ENCODE measurements at regions of chr12 and their contacts with region 1.

Region 1: GRCh38 chr12:124506145-124506831 is 61.1 kb downstream of the NCOR2 start:
- DNase-seq: no peak
- H3K4me3 ChIP-seq: no peak overlapping the region
- H3K27ac ChIP-seq: no peak overlapping the region
- H3K4me1 ChIP-seq: peaks cover 32% of the 10 kb centered on the region
- H3K27me3 ChIP-seq: no peaks in the 10 kb centered on the region
- CTCF ChIP-seq: no peak

Region 2: DNA sequence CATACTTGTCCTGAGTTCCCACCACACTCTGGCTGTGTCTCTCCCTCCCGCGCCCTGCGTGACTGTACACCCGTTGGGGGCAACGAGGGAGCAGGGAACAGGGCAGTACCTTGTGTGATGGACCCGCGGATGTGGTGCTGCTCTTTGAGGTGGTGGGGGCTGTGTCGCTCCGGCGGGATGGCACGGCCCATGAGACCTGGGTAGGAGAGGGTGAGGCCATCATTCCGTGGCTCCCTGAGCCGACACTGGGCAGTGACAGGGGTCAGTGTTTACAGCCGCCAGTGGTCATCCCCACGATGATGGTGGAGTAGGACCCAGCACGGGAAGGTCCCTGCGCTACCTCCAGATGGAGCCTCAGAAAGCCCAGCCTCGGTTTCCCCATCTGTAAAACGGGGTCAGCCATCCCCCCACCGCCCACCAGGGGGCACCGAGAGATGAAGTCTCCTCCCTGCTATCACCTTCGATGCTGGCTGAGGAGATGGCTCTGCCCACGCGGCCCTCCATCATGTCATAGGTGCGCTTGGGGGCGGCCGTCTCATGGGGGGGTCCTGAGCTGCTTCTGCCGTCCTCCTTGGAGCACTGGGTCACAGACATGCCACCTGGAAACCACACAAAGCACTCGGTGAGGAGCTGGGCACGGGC is 158.5 kb before region 1 on chr12:
- CTCF ChIA-PET with region 1: no interaction called
- POLR2A ChIA-PET with region 1: no interaction called
- intact Hi-C with region 1: no loop called
- DNase-seq: no peak
- H3K4me3 ChIP-seq: no peak overlapping the region
- H3K27ac ChIP-seq: no peak overlapping the region
- H3K4me1 ChIP-seq: no peaks in the 10 kb centered on the region
- H3K27me3 ChIP-seq: no peaks in the 10 kb centered on the region
- CTCF ChIP-seq: peak; percentile 71

Region 3: GRCh38 chr12:124727264-124727721 is 221.0 kb after region 1 on chr12:
- CTCF ChIA-PET with region 1: no interaction called
- POLR2A ChIA-PET with region 1: no interaction called
- intact Hi-C with region 1: loop called (anchors 5 kb)
- DNase-seq: peak; percentile 86 to 97
- H3K4me3 ChIP-seq: no peak overlapping the region
- H3K27ac ChIP-seq: peak overlapping the region; percentile 91
- H3K4me1 ChIP-seq: peaks cover 45% of the 10 kb centered on the region
- H3K27me3 ChIP-seq: no peaks in the 10 kb centered on the region
- CTCF ChIP-seq: no peak

Region 4: DNA sequence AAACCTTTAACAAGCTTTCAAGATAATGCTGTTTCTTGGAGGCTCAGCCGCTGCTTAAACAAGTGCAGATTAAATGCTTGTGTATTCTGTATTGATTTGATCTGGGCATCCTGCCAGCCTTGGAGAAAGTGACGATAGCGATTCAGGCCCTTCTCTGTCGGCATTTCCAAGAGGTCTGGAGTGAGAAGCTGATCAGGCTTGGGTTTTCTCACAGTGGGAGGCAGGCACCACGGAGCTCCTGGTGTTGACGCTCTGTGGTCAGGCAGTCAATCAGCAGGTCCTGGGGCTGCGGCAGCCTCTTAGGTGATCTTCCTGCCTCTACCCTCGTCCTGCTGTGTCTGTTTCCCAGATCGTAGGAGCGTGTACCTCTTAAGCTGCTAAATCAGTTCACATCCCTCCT is 714.1 kb after region 1 on chr12:
- CTCF ChIA-PET with region 1: no interaction called
- POLR2A ChIA-PET with region 1: no interaction called
- intact Hi-C with region 1: no loop called
- DNase-seq: no peak
- H3K4me3 ChIP-seq: no peak overlapping the region
- H3K27ac ChIP-seq: no peak overlapping the region
- H3K4me1 ChIP-seq: no peaks in the 10 kb centered on the region
- H3K27me3 ChIP-seq: peaks cover 94% of the 10 kb centered on the region
- CTCF ChIP-seq: no peak